Activated naive CD4-positive, alpha-beta T cell treated with anti-CD3 and anti-CD28 coated beads for 36 hours (primary cell): ENCODE measurements at regions of chr19 and their contacts with region 1.

Region 1: GRCh38 chr19:610801-611505 is 21.3 kb downstream of the HCN2 start:
- DNase-seq: peak; percentile 73
- H3K4me3 Mint-ChIP-seq: peak overlapping the region; percentile 82
- H3K27ac Mint-ChIP-seq: peak overlapping the region; percentile 94
- H3K4me1 Mint-ChIP-seq: peaks cover 28% of the 10 kb centered on the region
- H3K27me3 Mint-ChIP-seq: no peaks in the 10 kb centered on the region

Region 2: GRCh38 chr19:633068-633785 is 22.3 kb after region 1 on chr19 and contains the start of gene POLRMT:
- CTCF ChIA-PET with region 1: interaction called, 3 read pairs
- intact Hi-C with region 1: loop called (anchors 1 kb)
- DNase-seq: peak; percentile 98
- H3K4me3 Mint-ChIP-seq: peak within 1 kb of the TSS; percentile 93
- H3K27ac Mint-ChIP-seq: peak within 1 kb of the TSS; percentile 78
- H3K4me1 Mint-ChIP-seq: peaks cover 37% of the 10 kb centered on the region
- H3K27me3 Mint-ChIP-seq: no peaks in the 10 kb centered on the region
- total RNA-seq, gene POLRMT: 63.8 to 65.6 TPM

Region 3: DNA sequence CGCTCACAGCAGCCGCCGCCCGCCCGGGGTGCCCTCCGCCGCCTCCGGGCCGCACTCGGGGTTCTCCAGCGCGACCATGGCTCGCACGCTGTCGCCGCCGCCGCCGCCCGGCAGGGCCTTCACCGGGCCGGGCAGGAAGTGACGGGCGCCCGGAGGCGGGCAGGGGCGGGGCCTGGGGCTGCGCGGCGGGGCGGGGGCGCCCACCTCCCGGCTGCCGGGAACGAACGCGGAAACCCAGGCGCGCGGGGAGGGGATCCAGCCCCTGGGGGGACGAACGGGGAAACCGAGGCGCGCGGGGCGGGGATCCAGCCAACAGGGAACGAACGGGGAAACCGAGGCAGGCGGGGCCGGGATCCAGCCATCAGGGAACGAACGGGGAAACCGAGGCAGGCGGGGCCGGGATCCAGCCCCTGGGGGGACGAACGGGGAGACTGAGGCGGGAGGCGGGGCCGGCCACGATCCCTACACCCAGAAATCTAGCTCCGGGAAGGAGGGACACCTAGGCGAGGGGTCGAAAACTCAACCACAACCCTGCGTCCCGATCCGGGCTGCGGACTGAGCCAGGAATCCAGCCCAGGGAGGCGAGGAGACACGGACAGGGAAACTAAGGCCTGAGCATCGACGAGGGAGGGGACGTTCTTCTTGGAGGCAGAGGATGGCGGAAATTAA is 302.3 kb after region 1 on chr19 and contains the start of gene R3HDM4:
- CTCF ChIA-PET with region 1: no interaction called
- intact Hi-C with region 1: loop called (anchors 1 kb)
- DNase-seq: peak; percentile 88
- H3K4me3 Mint-ChIP-seq: peak within 1 kb of the TSS; percentile 84
- H3K27ac Mint-ChIP-seq: peak within 1 kb of the TSS; percentile 95
- H3K4me1 Mint-ChIP-seq: peaks cover 34% of the 10 kb centered on the region
- H3K27me3 Mint-ChIP-seq: peaks cover 2% of the 10 kb centered on the region
- total RNA-seq, gene R3HDM4: 111 to 120 TPM

Region 4: GRCh38 chr19:1260636-1261537 is 649.9 kb after region 1 on chr19:
- CTCF ChIA-PET with region 1: no interaction called
- intact Hi-C with region 1: loop called (anchors 5 kb)
- DNase-seq: peak; percentile 97
- H3K4me3 Mint-ChIP-seq: peak overlapping the region; percentile 92
- H3K27ac Mint-ChIP-seq: peak overlapping the region; percentile 97
- H3K4me1 Mint-ChIP-seq: peaks cover 50% of the 10 kb centered on the region
- H3K27me3 Mint-ChIP-seq: no peaks in the 10 kb centered on the region